ENCODE measurements at regions of chr10 and their contacts with region 1.

Region 1: GRCh38 chr10:24202181-24202570 is 6.8 kb upstream of the KIAA1217 start:
- DNase-seq: no peak
- H3K4me3 Mint-ChIP-seq: no peak overlapping the region
- H3K27ac Mint-ChIP-seq: no peak overlapping the region
- H3K4me1 Mint-ChIP-seq: no peaks in the 10 kb centered on the region
- H3K27me3 Mint-ChIP-seq: no peaks in the 10 kb centered on the region
- CTCF ChIP-seq: no peak

Region 2: GRCh38 chr10:24503461-24504320 is 301.5 kb after region 1 on chr10:
- CTCF ChIA-PET with region 1: interaction called, 9 read pairs
- POLR2A ChIA-PET with region 1: no interaction called
- intact Hi-C with region 1: loop called (anchors 2 kb)
- DNase-seq: peak; percentile 81
- H3K4me3 Mint-ChIP-seq: no peak overlapping the region
- H3K27ac Mint-ChIP-seq: peak overlapping the region; percentile 23
- H3K4me1 Mint-ChIP-seq: no peaks in the 10 kb centered on the region
- H3K27me3 Mint-ChIP-seq: no peaks in the 10 kb centered on the region
- CTCF ChIP-seq: peak; percentile 86

Measured in MCF 10A (cell line).